SK-N-SH (cell line): ENCODE measurements at regions of chr2 and their contacts with region 1.

Region 1: GRCh38 chr2:183248866-183249567 is 124.8 kb downstream of the NUP35 start:
- DNase-seq: peak; percentile 47
- H3K4me3 ChIP-seq: no peak overlapping the region
- H3K27ac ChIP-seq: no peak overlapping the region
- H3K4me1 ChIP-seq: no peaks in the 10 kb centered on the region; a peak in 1 of 4 replicates
- H3K27me3 ChIP-seq: no peaks in the 10 kb centered on the region
- CTCF ChIP-seq: peak; percentile 77
- EP300 ChIP-seq: no peak
- RAD21 ChIP-seq: peak; percentile 77

Region 2: DNA sequence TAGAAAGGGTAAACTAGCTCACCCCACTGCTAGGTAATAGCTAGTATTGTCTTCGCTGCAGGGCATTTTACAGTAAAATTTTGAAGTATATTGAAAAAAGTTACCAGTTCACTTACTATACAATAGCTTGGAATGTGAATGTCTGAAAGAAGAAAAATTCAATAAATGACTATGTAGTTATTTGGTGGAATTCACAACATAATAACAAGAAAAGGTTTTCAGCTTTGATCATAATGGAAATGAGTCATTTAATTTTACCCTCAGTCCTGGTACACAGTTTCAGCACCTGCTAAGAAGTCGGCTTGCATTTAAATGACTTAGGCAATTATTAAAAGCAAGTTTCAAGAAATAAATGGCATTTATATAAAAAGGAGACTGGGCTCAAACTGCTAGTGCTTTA is 34.3 kb before region 1 on chr2:
- CTCF ChIA-PET with region 1: no interaction called
- POLR2A ChIA-PET with region 1: no interaction called
- DNase-seq: no peak
- H3K4me3 ChIP-seq: no peak overlapping the region
- H3K27ac ChIP-seq: no peak overlapping the region
- H3K4me1 ChIP-seq: no peaks in the 10 kb centered on the region
- H3K27me3 ChIP-seq: no peaks in the 10 kb centered on the region
- CTCF ChIP-seq: no peak
- EP300 ChIP-seq: no peak
- RAD21 ChIP-seq: no peak

Region 3: DNA sequence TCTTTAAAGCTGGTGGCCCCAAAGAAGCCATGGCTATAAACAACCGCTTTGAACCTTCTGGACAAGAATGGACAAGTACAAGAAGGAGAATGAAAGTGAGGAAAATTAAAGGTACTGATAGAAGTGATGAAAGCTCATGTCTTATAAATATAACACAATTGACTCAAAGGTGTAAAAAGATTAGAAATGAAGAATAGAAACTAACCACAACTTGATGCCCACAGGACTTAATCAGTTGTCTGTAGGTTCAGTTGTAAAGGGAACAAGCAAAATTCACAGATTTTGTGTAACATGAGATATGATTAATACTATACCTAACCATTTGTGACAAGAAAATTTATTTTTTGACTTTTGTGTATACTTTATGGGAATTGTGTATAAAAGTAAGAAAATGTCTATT is 10.9 kb after region 1 on chr2:
- CTCF ChIA-PET with region 1: interaction called, 26 read pairs
- POLR2A ChIA-PET with region 1: interaction called, 3 read pairs
- DNase-seq: no peak
- H3K4me3 ChIP-seq: no peak overlapping the region
- H3K27ac ChIP-seq: no peak overlapping the region
- H3K4me1 ChIP-seq: no peaks in the 10 kb centered on the region
- H3K27me3 ChIP-seq: no peaks in the 10 kb centered on the region
- CTCF ChIP-seq: no peak
- EP300 ChIP-seq: no peak
- RAD21 ChIP-seq: no peak

Region 4: GRCh38 chr2:183359867-183360266 is 110.8 kb after region 1 on chr2:
- CTCF ChIA-PET with region 1: interaction called, 20 read pairs
- POLR2A ChIA-PET with region 1: no interaction called
- DNase-seq: no peak
- H3K4me3 ChIP-seq: no peak overlapping the region
- H3K27ac ChIP-seq: no peak overlapping the region
- H3K4me1 ChIP-seq: no peaks in the 10 kb centered on the region
- H3K27me3 ChIP-seq: no peaks in the 10 kb centered on the region
- CTCF ChIP-seq: peak; percentile 67
- EP300 ChIP-seq: no peak
- RAD21 ChIP-seq: peak; percentile 64

Region 5: DNA sequence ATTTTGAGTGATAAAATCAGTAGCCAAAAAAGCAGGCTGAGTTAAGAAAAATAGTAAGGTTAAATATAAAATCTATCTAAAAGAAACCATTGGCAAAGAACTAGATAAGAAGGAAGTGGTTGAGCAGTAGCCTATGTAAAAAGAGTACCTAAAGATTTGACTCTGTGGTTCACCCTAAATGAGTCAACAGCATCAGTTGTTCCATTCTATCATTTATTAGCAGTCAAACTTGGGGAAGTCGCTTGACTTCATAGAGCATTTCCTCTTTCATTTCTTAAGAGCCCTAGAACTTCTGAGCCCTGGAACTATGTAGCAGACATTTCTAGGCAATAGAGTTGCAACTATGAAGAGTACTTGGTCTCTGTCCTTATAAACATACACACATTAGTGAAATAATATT is 256.9 kb after region 1 on chr2:
- CTCF ChIA-PET with region 1: no interaction called
- POLR2A ChIA-PET with region 1: no interaction called
- DNase-seq: no peak
- H3K4me3 ChIP-seq: no peak overlapping the region
- H3K27ac ChIP-seq: no peak overlapping the region
- H3K4me1 ChIP-seq: no peaks in the 10 kb centered on the region
- H3K27me3 ChIP-seq: no peaks in the 10 kb centered on the region
- CTCF ChIP-seq: no peak
- EP300 ChIP-seq: no peak
- RAD21 ChIP-seq: no peak